Right cardiac atrium (tissue), 5 donors: ENCODE measurements at regions of chr10 and their contacts with region 1.

Region 1: DNA sequence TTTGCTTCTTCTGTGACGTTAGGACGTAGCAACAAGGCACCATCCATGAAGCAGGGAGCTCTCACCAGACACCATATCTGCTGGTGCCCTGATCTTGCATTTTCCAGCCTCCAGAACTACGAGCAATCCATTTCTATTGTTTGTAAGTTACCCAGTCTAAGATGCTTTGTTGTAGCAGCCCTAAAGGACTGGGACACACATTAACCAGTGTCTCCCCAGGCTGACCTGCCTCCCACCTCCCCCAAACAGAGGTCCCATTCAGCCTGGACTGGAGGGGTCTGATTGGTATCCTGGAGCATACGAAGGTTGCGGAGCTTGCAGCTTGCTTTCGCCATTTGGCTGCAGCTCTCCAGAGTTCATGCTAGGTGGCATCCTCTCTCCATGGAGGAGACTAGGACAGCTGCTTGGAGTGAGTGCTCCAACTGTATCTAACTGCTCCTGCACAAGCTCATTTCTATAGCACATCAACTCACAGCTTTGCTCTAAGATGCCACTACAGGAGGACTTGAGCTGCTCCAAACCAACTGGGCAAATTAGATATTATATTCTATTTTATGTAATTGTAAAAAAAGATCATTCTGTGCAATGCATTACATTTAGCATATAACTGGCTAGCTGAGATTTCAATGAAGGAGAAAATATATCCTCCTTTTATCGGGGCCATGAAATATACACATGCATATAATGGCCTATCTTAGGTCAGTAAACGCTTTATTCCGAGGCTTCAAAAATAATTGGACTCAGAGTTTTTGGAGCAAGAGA is 8.0 kb upstream of the GRK5 start:
- DNase-seq: peak in 2 of 3 donors; percentile 48 to 79
- ATAC-seq: peak; percentile 93 to 96
- H3K4me3 ChIP-seq: no peak overlapping the region
- H3K27ac ChIP-seq: no peak overlapping the region
- H3K4me1 ChIP-seq: no peaks in the 10 kb centered on the region
- H3K27me3 ChIP-seq: no peaks in the 10 kb centered on the region

Region 2: GRCh38 chr10:118840071-118840775 is 359.2 kb before region 1 on chr10:
- intact Hi-C with region 1: no loop called
- DNase-seq: no peak
- ATAC-seq: no peak
- H3K4me3 ChIP-seq: no peak overlapping the region
- H3K27ac ChIP-seq: no peak overlapping the region
- H3K4me1 ChIP-seq: no peaks in the 10 kb centered on the region
- H3K27me3 ChIP-seq: no peaks in the 10 kb centered on the region

Region 3: GRCh38 chr10:119139464-119140067 is 59.8 kb before region 1 on chr10:
- intact Hi-C with region 1: no loop called
- DNase-seq: peak in 1 of 3 donors; percentile 68
- ATAC-seq: peak; percentile 51 to 65
- H3K4me3 ChIP-seq: no peak overlapping the region
- H3K27ac ChIP-seq: no peak overlapping the region
- H3K4me1 ChIP-seq: no peaks in the 10 kb centered on the region
- H3K27me3 ChIP-seq: no peaks in the 10 kb centered on the region

Region 4: GRCh38 chr10:119416855-119417254 is 217.4 kb after region 1 on chr10:
- intact Hi-C with region 1: loop called in 3 of 4 experiments (anchors 2 to 10 kb)
- DNase-seq: peak; percentile 64 to 90 (median 85)
- ATAC-seq: peak; percentile 10 to 14
- H3K4me3 ChIP-seq: no peak overlapping the region
- H3K27ac ChIP-seq: no peak overlapping the region
- H3K4me1 ChIP-seq: peaks cover 14% of the 10 kb centered on the region
- H3K27me3 ChIP-seq: no peaks in the 10 kb centered on the region

Region 5: DNA sequence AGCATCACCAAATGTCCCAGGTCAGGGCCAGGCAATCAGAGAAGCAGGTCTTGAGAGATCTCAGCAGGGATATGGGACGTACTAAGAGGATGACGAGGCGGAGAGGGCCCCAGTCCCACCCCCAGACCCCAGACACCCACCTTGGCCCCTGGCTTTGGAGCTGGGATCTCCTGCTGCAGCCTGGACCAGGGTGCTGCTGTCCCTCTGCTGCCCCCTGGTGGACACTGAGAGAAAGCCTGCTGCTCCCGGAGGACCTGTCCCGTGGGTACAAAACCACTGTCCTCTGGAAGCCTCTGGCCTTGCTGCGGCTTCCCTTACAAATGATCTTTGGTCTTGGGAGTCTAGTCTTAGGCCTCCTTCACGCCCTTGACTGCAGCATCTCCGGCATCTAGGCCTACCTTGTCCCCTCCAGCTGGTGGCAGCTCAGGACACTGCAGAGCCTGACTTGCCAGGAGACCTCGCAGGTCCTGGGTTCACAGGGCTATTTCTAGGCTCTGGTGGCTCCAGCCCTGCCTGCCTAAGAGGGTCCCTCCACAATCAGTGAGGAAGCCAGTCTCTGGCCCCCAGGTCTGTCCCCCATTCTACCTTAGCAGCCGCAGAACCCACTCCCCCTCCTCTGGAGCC is 246.0 kb after region 1 on chr10:
- intact Hi-C with region 1: loop called (anchors 2 to 10 kb)
- DNase-seq: peak; percentile 85 to 93 (median 93)
- ATAC-seq: peak; percentile 61 to 63
- H3K4me3 ChIP-seq: no peak overlapping the region
- H3K27ac ChIP-seq: no peak overlapping the region
- H3K4me1 ChIP-seq: no peaks in the 10 kb centered on the region
- H3K27me3 ChIP-seq: no peaks in the 10 kb centered on the region

Region 6: DNA sequence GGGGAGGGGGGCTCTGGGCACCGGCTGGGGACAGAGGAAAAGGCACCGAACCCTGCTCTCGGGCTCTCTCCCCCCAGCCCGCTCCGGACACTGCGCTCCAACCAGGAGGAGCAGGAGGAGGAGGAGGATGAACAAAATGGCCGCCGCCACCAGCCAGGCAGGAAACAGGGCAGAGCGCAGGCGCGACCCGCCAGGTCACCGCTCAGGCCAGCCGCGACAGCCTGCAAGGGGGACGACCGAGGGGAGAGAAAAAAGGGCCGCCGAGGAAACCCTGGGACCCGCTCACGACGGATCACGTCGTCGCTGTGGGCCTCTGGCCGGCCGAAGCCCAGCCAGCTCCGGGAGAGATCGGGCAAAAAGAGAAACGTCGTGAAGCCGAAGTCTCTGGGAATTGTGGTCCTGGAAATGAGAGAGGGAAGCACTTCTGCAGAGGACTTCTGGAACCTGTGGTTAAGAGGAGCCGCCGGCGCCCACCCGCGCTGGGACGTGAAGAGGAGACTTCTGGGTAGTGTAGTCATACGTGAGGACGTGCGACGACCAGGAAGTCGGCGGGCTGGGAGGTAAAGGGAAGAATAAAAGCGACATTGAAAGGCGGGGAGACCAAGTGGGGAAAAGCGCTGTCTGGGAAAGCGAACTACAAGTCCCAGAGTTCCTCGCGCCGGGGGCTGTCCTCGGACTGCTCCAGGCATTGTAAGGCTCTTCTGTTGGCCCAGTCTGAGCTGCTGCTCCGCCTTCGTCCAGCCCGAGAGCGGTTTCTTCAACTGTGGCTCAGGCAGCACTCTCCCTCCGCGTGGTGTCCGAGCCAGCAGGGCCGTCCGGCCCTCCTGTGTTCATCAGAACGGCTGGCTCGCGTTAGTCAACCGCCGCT is 397.4 kb after region 1 on chr10 and contains the start of gene TIAL1:
- intact Hi-C with region 1: no loop called
- DNase-seq: peak; percentile 98 to 99 (median 98)
- ATAC-seq: peak; percentile 96 to 97
- H3K4me3 ChIP-seq: peak within 1 kb of the TSS; percentile 89
- H3K27ac ChIP-seq: peak within 1 kb of the TSS; percentile 99
- H3K4me1 ChIP-seq: no peaks in the 10 kb centered on the region
- H3K27me3 ChIP-seq: no peaks in the 10 kb centered on the region
- total RNA-seq, gene TIAL1: 81.3 to 92.6 (median 84.9) TPM

Region 7: DNA sequence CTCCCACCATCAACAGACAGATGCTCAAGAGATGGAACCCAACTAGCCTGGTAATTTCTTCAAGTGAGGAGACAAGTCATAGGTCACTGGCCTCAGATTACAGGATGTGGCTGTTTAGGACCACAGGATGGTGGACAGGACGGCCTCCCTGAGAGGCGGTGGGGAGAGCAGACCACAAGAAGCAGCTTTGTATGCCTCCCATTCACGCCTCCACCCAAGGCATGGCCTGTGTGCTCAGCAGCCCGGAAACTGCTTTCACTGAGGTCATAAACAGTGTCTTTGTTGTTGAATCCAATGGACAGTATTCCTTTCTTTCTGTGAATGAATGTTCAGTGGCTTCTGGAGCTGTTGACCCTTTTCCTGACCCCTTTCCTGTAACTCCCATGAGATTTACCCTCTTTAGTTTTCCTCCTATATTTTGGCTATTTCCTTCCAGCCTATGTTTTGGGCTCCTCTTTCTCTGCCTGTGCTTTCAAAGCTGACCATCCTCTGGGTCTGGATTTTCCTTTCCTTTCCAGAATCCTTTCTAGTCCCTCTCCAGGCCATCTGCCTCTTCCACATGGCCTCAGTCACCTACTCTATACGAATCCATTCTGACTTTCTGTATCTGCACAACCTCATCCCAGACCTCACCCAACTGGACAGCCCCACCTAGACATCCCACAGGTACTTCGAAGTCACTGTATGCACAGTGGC is 494.0 kb after region 1 on chr10:
- intact Hi-C with region 1: no loop called
- DNase-seq: no peak
- ATAC-seq: peak; percentile 38 to 47
- H3K4me3 ChIP-seq: no peak overlapping the region
- H3K27ac ChIP-seq: no peak overlapping the region
- H3K4me1 ChIP-seq: no peaks in the 10 kb centered on the region
- H3K27me3 ChIP-seq: no peaks in the 10 kb centered on the region